Pancreas (tissue), 10 donors: ENCODE measurements at regions of chr18 and their contacts with region 1.

Region 1: GRCh38 chr18:7755753-7756475 is 188.8 kb downstream of the PTPRM start:
- DNase-seq: no peak
- ATAC-seq: peak; percentile 55 to 88 (median 78)
- H3K4me3 ChIP-seq: no peak overlapping the region
- H3K27ac ChIP-seq: no peak overlapping the region
- H3K4me1 ChIP-seq: peaks cover 0 to 24% (median 18%) of the 10 kb centered on the region in 3 donors
- H3K27me3 ChIP-seq: no peaks in the 10 kb centered on the region
- CTCF ChIP-seq: peak in 2 of 4 donors; percentile 8 to 19

Region 2: DNA sequence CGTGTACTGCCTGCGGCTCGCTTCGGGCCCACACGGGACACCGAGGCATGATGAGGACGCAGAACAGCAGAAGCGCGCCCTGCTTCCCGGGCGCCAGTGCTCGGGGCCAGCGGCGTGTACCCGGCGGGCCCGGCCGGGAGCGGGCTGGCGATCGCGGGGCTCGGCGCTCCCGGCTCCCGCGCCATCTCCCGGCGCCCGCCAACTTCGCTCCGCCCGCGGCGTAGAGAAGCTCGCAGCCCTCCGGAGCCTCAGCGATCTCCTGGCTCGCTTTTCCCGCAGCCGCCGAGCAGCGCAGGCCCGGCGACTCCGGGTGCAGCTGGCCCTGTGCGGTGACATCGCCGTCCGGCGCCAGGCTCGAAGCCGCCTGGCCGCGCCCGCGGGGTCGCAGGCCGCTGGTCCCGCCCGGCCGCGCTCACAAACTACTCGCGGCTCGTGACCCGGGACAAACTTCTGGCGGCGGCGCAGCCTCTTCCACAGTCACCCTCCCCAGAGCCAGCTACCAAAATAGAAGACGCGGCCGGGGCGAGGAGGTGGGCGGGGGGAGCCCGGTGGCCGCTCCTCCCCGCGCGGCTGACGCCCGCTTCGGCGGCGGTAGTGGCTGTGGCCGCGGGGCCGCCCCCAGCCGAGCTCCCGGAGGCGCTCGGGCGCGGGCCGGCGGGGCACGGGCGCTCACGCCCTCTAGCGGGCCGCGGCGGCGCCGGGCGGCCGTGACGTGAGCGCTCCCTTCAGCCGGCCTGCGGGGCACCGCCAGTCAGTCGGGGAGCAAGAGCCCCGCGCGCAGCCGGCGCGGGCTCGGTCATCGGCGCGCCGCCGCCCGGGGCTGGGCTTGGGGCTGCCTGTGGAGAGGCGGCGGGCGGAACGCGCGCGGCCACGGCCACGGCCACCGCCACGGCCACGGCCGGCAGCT is 189.1 kb before region 1 on chr18 and contains the start of gene PTPRM:
- intact Hi-C with region 1: loop called in 1 of 3 experiments (anchors 10 kb)
- DNase-seq: peak; percentile 79 to 93 (median 88)
- ATAC-seq: peak; percentile 84 to 89 (median 84)
- H3K4me3 ChIP-seq: peak within 1 kb of the TSS; percentile 71 to 91 (median 84)
- H3K27ac ChIP-seq: peak within 1 kb of the TSS; percentile 91 to 98 (median 96)
- H3K4me1 ChIP-seq: peaks cover 0 to 10% (median 0%) of the 10 kb centered on the region in 3 donors
- H3K27me3 ChIP-seq: no peaks in the 10 kb centered on the region
- CTCF ChIP-seq: no peak
- total RNA-seq, gene PTPRM: 14.5 to 30.4 (median 17.1) TPM